Posterior vena cava (tissue), 2 donors: ENCODE measurements at regions of chr5 and their contacts with region 1.

Region 1: GRCh38 chr5:31106691-31107546 is 86.6 kb upstream of the CDH6 start:
- DNase-seq: no peak

Region 2: DNA sequence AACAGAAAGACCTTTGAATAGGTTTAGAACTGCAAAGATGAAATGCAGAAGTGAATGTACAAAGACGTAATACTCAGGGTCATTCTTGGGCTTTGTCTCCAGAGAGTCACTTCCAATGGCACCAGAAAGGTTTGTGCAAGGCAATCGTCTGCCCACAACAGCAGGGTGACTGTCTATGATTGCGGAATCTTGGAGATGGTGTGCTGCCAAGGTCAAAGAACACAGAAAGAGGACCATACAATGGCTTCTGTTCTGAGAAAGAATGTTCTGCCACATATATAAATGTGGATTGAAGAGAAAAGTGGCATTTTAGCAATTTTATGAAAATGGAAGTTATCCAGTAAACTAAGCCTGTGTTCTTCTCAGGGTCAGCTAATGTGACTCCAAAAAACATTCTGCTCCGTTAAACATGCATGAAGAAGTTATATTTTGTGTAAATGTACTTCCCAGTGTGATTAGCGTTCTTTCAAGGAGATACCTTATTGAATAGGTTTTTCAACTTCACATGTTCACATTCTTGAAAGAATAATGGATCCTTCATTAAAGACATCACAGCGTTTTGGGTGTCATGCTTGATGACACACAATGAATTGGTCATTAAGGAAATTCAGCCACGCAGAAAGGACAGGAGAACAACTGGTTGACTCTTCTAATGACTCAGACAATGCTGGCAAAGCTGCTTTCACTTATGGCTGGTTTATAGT is 13.2 kb after region 1 on chr5:
- intact Hi-C with region 1: no loop called
- DNase-seq: no peak

Region 3: GRCh38 chr5:31630931-31631330 is 524.0 kb after region 1 on chr5:
- intact Hi-C with region 1: loop called in 1 of 2 experiments (anchors 5 kb)
- DNase-seq: no peak